PC-9 (cell line): ENCODE measurements at regions of chr2 and their contacts with region 1.

Region 1: GRCh38 chr2:39547811-39548719 is 111.0 kb upstream of the MAP4K3 start:
- DNase-seq: peak; percentile 74 to 96
- H3K4me3 ChIP-seq: no peak overlapping the region
- H3K27ac ChIP-seq: peak overlapping the region; percentile 64
- H3K4me1 ChIP-seq: peaks cover 50% of the 10 kb centered on the region
- H3K27me3 ChIP-seq: no peaks in the 10 kb centered on the region
- CTCF ChIP-seq: no peak

Region 2: DNA sequence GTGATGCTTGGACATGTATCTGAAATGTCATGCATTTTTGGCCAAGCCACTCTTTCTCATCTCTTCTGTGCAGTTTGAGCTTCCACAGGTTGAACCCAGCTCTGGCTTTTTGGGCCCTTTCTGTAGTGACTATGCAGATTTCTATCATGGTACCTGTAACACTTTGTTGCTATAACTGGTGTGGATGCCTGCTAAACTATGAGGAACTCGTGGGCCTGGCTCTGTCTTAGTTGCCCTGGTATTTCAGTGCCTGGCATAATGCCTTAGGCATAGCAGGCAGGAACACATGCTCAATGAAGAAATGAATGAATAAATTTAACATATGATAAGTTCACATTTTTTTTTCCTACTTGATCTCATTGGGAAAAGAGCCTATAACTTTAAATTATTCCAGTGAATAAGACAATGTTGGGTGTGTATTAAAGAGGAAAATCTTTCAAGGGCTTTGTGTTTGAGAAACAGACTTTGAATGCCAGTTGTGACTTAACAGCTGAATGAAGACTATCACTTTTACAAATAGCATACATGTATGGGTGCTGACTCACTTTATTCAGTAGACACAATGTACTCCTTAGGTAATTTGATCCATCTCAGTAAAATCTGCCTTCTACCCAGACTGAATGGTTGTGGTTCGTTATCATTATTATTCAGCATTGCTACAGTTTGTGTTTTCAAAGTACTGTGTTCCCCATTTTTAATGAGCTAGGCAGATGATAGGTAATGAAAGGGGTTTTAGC is 24.6 kb before region 1 on chr2:
- CTCF ChIA-PET with region 1: interaction called, 4 read pairs
- POLR2A ChIA-PET with region 1: interaction called, 10 read pairs
- intact Hi-C with region 1: loop called (anchors 1 kb)
- DNase-seq: peak; percentile 49 to 91
- H3K4me3 ChIP-seq: no peak overlapping the region
- H3K27ac ChIP-seq: peak overlapping the region; percentile 51
- H3K4me1 ChIP-seq: peaks cover 22% of the 10 kb centered on the region
- H3K27me3 ChIP-seq: no peaks in the 10 kb centered on the region
- CTCF ChIP-seq: no peak

Region 3: GRCh38 chr2:39568561-39569006 is 20.5 kb after region 1 on chr2:
- CTCF ChIA-PET with region 1: no interaction called
- POLR2A ChIA-PET with region 1: interaction called, 7 read pairs
- intact Hi-C with region 1: loop called (anchors 1 kb)
- DNase-seq: peak; percentile 57 to 89
- H3K4me3 ChIP-seq: peak overlapping the region; percentile 40; the same call in 1 of the 2 replicates
- H3K27ac ChIP-seq: peak overlapping the region; percentile 83
- H3K4me1 ChIP-seq: peaks cover 49% of the 10 kb centered on the region
- H3K27me3 ChIP-seq: no peaks in the 10 kb centered on the region
- CTCF ChIP-seq: no peak

Region 4: DNA sequence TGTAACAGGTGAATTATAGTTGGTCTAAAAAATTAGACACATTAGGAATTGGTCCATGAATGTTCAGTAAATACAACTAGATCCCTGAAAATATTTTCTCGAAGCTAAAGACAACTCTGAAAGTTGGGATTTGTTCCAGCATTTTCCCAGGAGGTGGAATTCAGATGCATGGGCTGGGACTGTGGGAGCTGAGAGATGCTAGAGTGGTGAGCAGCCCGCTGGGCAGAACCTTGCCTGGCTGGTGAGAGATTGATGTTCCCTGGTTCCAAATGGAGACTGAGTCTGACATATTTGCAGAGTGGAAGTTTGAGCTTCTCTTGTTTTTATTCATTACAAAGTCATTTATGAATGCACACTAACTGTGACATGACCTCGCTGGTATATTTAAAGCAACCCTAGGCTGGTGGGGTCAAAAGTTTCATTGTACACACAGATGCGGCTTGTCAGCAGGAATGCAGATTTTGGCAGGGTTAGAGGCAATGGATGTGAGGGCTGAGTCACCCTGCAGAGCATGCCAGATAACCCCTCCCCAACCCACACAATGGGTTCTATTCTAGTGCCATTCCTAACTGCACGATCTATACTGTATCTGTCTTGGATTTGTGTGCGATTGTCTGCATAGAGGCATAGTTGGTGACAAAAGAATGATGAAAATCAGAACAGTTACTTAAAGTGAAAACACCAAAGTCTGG is 94.1 kb after region 1 on chr2:
- CTCF ChIA-PET with region 1: no interaction called
- POLR2A ChIA-PET with region 1: no interaction called
- intact Hi-C with region 1: loop called (anchors 1 kb)
- DNase-seq: peak; percentile 76 to 82
- H3K4me3 ChIP-seq: no peak overlapping the region
- H3K27ac ChIP-seq: no peak overlapping the region
- H3K4me1 ChIP-seq: peaks cover 13% of the 10 kb centered on the region
- H3K27me3 ChIP-seq: no peaks in the 10 kb centered on the region
- CTCF ChIP-seq: no peak